HepG2 (cell line): ENCODE measurements at regions of chr11 and their contacts with region 1.

Region 1: GRCh38 chr11:104968355-104968855 is at the start of gene CASP4:
- DNase-seq: peak; percentile 56
- ATAC-seq: peak; percentile 52
- H3K4me3 ChIP-seq: peak within 1 kb of the TSS; percentile 67 to 84 (median 78)
- H3K27ac ChIP-seq: peak within 1 kb of the TSS; percentile 72
- H3K4me1 ChIP-seq: peaks cover 33% of the 10 kb centered on the region
- H3K27me3 ChIP-seq: no peaks in the 10 kb centered on the region; a peak in 1 of 5 replicates
- CTCF ChIP-seq: no peak
- EP300 ChIP-seq: peak in 1 of 2 experiments; percentile 23; a peak in 1 of 4 replicates
- POLR2A ChIP-seq: peak in 1 of 2 experiments; percentile 52; a peak in 2 of 4 replicates
- RAD21 ChIP-seq: no peak
- total RNA-seq, gene CASP4: 69.8 and 98.1 TPM in 2 replicates

Region 2: DNA sequence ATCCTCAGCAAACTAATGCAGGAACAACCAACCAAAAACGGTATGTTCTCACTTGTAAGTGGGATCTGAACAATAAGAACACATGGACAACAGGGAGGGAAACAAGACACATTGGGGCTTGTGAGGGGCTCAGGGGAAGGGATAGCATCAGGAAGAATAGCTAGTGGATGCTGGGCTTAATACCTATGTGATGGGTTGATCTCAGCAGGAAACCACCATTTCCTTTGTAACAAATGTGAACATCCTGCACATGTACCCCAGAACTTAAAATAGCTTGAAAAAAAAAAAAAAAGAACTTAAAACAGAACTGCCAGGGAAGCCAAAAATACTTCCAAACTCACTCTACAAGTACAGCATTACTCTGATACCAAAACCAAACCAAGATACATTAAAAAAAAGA is 33.8 kb before region 1 on chr11:
- CTCF ChIA-PET with region 1: no interaction called
- POLR2A ChIA-PET with region 1: no interaction called
- in situ Hi-C with region 1: no loop called
- intact Hi-C with region 1: no loop called
- DNase-seq: no peak
- ATAC-seq: no peak
- H3K4me3 ChIP-seq: no peak overlapping the region
- H3K27ac ChIP-seq: no peak overlapping the region
- H3K4me1 ChIP-seq: no peaks in the 10 kb centered on the region
- H3K27me3 ChIP-seq: no peaks in the 10 kb centered on the region
- CTCF ChIP-seq: no peak
- EP300 ChIP-seq: no peak
- POLR2A ChIP-seq: no peak
- RAD21 ChIP-seq: no peak

Region 3: DNA sequence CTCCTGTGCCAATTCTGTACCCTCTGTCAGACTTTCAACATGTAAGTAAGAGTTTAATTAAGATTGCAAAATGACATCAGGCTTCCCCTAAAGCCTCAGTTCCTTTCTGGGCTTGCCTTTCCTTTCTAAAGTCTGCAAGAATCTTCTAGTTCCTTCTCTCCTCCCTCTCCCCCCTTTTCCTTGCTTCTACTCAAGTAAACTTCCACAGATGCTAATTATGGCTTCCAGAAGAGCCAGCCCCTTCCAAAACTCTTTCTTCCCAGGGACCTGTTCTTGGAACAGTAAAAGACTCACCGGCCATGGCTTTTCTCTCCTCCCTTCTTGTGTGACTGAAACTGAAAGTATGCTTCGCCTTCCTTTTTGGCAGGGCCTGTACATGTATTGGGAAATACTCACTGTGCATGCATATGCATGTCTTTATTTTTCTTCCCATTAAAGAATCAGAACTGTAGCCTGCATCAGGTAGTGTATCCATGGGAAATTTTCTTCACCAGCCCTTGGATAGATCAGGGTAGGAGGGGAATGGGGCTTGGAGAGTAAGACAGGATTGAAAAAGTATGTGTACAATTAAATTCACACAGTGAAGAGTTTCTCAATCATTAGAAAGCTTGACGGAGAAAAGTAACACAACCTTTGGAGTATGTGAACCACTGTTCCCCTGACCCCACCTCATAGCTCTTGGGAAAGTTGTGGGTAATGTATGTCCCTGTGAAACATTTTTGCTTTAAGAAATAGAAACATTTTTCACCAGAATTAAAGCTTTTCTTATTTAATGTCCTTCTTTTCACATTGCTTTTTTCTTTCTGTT is 66.6 kb after region 1 on chr11 and contains the start of gene CASP1:
- CTCF ChIA-PET with region 1: no interaction called
- POLR2A ChIA-PET with region 1: no interaction called
- in situ Hi-C with region 1: no loop called
- intact Hi-C with region 1: no loop called
- DNase-seq: no peak
- ATAC-seq: peak; percentile 50; the same call in 2 of the 3 replicates
- H3K4me3 ChIP-seq: no peak within 1 kb of the TSS
- H3K27ac ChIP-seq: no peak within 1 kb of the TSS
- H3K4me1 ChIP-seq: peaks cover 13% of the 10 kb centered on the region
- H3K27me3 ChIP-seq: no peaks in the 10 kb centered on the region
- CTCF ChIP-seq: no peak
- EP300 ChIP-seq: no peak
- POLR2A ChIP-seq: no peak
- RAD21 ChIP-seq: no peak
- total RNA-seq, gene CASP1: 5.2 and 6.6 TPM in 2 replicates

Region 4: GRCh38 chr11:106021967-106022794 is 1053.8 kb after region 1 on chr11 and contains the start of gene MSANTD4:
- CTCF ChIA-PET with region 1: no interaction called
- POLR2A ChIA-PET with region 1: no interaction called
- in situ Hi-C with region 1: no loop called
- intact Hi-C with region 1: loop called (anchors 5 kb)
- DNase-seq: peak; percentile 97
- ATAC-seq: peak; percentile 99
- H3K4me3 ChIP-seq: peak within 1 kb of the TSS; percentile 74 to 96 (median 88)
- H3K27ac ChIP-seq: peak within 1 kb of the TSS; percentile 37
- H3K4me1 ChIP-seq: peaks cover 28% of the 10 kb centered on the region
- H3K27me3 ChIP-seq: no peaks in the 10 kb centered on the region
- CTCF ChIP-seq: 0 out of 2 replicates have a peak, but pooled peaks have one; percentile 7
- EP300 ChIP-seq: no peak
- POLR2A ChIP-seq: peak; percentile 46 to 69
- RAD21 ChIP-seq: no peak
- total RNA-seq, gene MSANTD4: 15.7 and 25.1 TPM in 2 replicates